Spleen (tissue), 13 donors: ENCODE measurements at regions of chr3 and their contacts with region 1.

Region 1: DNA sequence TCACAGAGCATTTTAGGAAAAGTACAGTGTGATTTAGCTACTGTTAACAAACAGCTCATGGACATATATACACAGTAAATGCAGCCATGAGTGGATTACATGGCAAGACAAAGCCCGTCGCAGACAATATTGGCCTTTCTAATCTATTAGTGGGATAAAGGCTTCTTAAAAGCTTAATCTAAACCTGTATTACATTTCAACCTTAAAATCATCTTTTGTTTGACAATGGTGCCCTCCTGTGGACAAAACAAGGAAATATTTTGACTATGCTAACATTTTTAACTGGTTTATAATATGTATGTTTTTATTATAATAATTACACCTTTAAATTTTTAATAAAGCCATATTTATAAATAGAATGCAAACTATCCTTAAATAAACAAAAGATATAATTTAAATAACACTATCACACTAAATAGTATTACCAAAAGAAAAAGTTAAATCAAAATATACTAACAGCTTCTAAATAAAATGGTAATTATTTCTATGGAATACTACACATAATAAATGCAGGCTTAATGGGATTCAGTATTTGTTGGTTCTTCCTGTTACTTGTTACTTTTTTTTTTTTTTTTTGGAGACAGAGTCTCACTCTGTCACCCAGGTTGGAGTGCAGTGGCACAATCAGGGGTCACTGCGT is 38.6 kb downstream of the TAFA4 start:
- DNase-seq: no peak
- H3K4me3 ChIP-seq: no peak overlapping the region
- H3K27ac ChIP-seq: no peak overlapping the region
- H3K4me1 ChIP-seq: no peaks in the 10 kb centered on the region
- H3K27me3 ChIP-seq: peaks cover 0 to 8% (median 0%) of the 10 kb centered on the region in 7 donors
- CTCF ChIP-seq: peak in 9 of 11 experiments; percentile 13 to 63 (median 49)
- POLR2A ChIP-seq: no peak

Region 2: DNA sequence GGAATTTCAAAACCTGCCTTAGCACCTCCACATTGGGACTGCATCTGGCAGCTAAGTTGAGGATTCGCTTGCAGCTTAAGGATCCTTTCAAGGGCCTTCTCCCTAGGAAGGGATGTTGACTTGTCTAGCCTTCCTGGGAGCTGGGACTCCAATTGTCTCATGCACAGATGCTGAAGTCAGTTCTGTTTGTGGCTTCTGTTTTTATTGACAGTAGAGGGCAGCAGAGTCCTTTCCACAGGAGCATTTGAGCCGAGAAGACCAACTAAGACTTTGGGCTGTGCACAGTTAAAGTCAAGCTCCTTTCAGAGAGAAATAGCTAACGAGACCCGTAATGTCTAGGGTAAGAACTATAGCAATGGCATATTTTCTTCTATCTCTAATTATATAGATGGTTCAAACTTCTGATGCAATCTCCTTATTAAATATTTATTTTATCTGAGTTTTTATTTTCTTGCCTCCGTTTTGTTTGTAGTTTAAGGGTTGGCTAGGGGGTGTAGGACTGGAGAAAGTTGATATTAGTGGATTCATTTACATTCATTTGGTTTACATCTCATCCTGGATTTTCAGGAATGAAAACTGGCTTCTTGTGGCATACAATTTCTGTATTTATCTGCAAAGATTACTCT is 1955.3 kb before region 1 on chr3:
- intact Hi-C with region 1: loop called (anchors 10 kb)
- DNase-seq: no peak
- H3K4me3 ChIP-seq: no peak overlapping the region
- H3K27ac ChIP-seq: no peak overlapping the region
- H3K4me1 ChIP-seq: no peaks in the 10 kb centered on the region
- H3K27me3 ChIP-seq: peaks cover 0 to 6% (median 0%) of the 10 kb centered on the region in 7 donors
- CTCF ChIP-seq: peak in 10 of 11 experiments; percentile 15 to 68 (median 58)
- POLR2A ChIP-seq: no peak

Region 3: GRCh38 chr3:68972358-68972979 is 78.7 kb after region 1 on chr3:
- intact Hi-C with region 1: loop called (anchors 5 kb)
- DNase-seq: no peak
- H3K4me3 ChIP-seq: no peak overlapping the region
- H3K27ac ChIP-seq: no peak overlapping the region
- H3K4me1 ChIP-seq: peaks cover 0 to 7% (median 0%) of the 10 kb centered on the region in 6 donors
- H3K27me3 ChIP-seq: no peaks in the 10 kb centered on the region
- CTCF ChIP-seq: peak; percentile 17 to 78 (median 65)
- POLR2A ChIP-seq: no peak